ENCODE measurements at regions of chr7 and their contacts with region 1.

Region 1: GRCh38 chr7:124399941-124400340 is 365.7 kb downstream of the GPR37 start:
- DNase-seq: no peak
- ATAC-seq: no peak
- H3K4me3 ChIP-seq: no peak overlapping the region
- H3K27ac ChIP-seq: no peak overlapping the region
- H3K4me1 ChIP-seq: no peaks in the 10 kb centered on the region
- H3K27me3 ChIP-seq: no peaks in the 10 kb centered on the region
- CTCF ChIP-seq: no peak
- POLR2A ChIP-seq: no peak
- RAD21 ChIP-seq: no peak

Region 2: DNA sequence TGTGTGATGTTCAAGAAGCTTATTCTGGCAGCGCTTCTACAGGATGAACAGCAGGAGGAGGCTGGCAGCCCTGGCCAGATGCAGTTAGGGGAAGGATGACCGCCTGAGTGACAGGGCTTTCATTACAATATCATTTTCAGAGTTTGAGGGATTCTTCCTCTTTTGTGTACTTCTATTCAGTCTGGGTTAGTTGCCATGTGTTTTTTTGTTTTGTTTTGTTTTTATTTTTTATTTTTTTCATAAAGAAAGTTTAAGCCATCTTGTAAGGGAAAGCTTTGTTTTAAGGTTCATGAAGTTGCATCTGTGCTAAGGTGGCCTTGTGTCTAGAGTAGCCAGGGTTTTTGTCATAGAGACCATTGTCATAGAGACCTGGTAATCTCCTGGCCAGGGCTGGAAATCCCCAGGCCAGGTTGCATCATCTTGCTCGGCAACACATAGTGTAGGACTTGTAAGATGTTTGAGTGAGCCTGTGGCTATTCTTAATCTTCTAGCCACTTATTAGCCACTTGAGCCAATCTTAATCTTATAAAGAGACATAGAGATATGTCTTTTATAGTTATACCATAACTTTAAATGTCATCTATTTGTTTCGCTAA is 136.6 kb before region 1 on chr7:
- CTCF ChIA-PET with region 1: no interaction called
- POLR2A ChIA-PET with region 1: no interaction called
- dilution Hi-C with region 1: no loop called
- in situ Hi-C with region 1: no loop called
- intact Hi-C with region 1: loop called (anchors 1 kb)
- DNase-seq: peak; percentile 54
- ATAC-seq: no peak
- H3K4me3 ChIP-seq: no peak overlapping the region
- H3K27ac ChIP-seq: no peak overlapping the region
- H3K4me1 ChIP-seq: no peaks in the 10 kb centered on the region; the same call in 1 of the 2 replicates
- H3K27me3 ChIP-seq: no peaks in the 10 kb centered on the region
- CTCF ChIP-seq: no peak
- POLR2A ChIP-seq: no peak
- RAD21 ChIP-seq: no peak

Region 3: DNA sequence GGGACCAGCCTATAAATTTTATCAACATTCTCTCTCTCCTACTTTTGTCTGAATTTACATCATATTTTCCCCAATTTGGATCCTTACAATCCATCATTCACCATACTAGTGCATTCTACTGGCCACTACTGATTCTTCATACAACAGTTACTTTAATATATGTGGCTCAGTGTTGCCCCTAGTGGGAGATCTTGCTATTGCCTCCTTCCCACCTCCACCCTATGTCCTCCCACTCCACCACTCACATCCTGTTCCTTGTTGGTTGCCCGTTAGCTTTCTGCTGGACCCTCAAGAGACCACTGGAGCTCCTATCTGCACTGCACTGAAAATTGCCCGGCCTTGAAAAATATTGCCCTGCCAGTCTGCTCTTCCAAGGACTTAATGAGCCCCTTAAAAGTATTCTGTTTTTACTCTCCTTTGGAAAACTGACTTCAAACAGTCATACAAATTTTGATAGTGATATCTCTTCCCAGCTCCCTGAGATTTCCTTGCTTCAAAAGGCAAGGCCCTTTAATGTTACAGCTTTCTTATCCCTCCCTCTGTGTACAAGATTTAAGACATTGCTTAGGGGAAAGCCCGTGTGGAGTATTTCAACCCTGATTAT is 123.8 kb before region 1 on chr7:
- CTCF ChIA-PET with region 1: no interaction called
- POLR2A ChIA-PET with region 1: no interaction called
- dilution Hi-C with region 1: no loop called
- in situ Hi-C with region 1: no loop called
- intact Hi-C with region 1: no loop called
- DNase-seq: peak; percentile 22
- ATAC-seq: peak; percentile 66
- H3K4me3 ChIP-seq: no peak overlapping the region
- H3K27ac ChIP-seq: no peak overlapping the region
- H3K4me1 ChIP-seq: 0 out of 2 replicates have a peak, but pooled peaks cover 1% of the 10 kb centered on the region
- H3K27me3 ChIP-seq: no peaks in the 10 kb centered on the region
- CTCF ChIP-seq: peak; percentile 41
- POLR2A ChIP-seq: no peak
- RAD21 ChIP-seq: peak; percentile 30; the same call in 1 of the 2 replicates